Thyroid gland (tissue), 4 donors: ENCODE measurements at regions of chr1 and their contacts with region 1.

Region 1: DNA sequence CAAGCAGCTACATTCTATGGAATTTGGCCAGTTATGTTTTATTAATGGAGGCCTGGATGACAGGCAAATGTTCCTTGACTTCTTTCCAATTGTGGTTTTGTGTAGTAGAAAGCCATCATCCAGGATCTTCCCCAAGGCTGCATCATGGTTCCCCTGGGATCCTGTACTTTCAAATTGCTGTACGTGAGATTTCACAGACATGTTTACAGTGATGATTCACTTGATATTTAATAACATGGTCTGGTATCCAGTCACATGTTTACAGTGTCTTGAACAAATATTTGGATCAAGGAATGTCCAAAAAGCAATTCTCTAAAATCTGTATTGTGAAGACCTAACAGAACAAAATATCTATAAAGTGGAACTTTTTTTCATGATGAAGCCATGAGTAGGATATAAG is 68.3 kb upstream of the ST6GALNAC3 start:
- DNase-seq: no peak
- H3K4me3 ChIP-seq: no peak overlapping the region
- H3K27ac ChIP-seq: no peak overlapping the region
- H3K4me1 ChIP-seq: peaks cover 0 to 8% of the 10 kb centered on the region in 2 donors
- H3K27me3 ChIP-seq: no peaks in the 10 kb centered on the region
- CTCF ChIP-seq: no peak
- POLR2A ChIP-seq: no peak

Region 2: DNA sequence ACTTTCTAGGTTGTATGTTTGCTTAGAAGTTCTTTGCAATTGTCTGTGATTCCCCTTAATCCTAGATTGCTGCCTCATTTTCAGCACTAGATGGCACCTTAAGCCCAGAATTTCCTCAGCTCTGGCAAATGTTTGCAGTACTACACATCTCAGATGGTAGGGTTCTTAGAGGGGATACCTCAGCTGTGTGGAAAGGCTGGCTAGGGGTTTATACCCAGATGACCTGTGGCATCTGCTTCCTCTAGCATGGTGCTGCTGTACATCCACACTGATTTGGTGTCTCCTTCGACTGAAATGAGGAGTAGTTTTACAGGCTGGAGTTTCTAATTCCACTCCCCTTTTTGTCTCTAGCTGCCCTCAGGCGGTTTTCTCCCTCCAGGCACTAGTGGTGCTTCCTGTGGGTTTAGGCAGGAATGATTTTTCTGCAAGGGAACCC is 97.5 kb before region 1 on chr1:
- intact Hi-C with region 1: no loop called
- DNase-seq: peak; percentile 4
- H3K4me3 ChIP-seq: no peak overlapping the region
- H3K27ac ChIP-seq: no peak overlapping the region
- H3K4me1 ChIP-seq: no peaks in the 10 kb centered on the region
- H3K27me3 ChIP-seq: no peaks in the 10 kb centered on the region
- CTCF ChIP-seq: peak in 4 of 6 experiments; percentile 28 to 63 (median 52)
- POLR2A ChIP-seq: no peak

Region 3: GRCh38 chr1:76124196-76124595 is 118.0 kb after region 1 on chr1:
- intact Hi-C with region 1: loop called (anchors 10 kb)
- DNase-seq: peak in 1 of 2 donors; percentile 19
- H3K4me3 ChIP-seq: no peak overlapping the region
- H3K27ac ChIP-seq: no peak overlapping the region
- H3K4me1 ChIP-seq: peaks cover 18 to 34% of the 10 kb centered on the region in 2 donors
- H3K27me3 ChIP-seq: no peaks in the 10 kb centered on the region
- CTCF ChIP-seq: no peak
- POLR2A ChIP-seq: no peak